Naive thymus-derived CD4-positive, alpha-beta T cell (primary cell): ENCODE measurements at regions of chr17 and their contacts with region 1.

Region 1: DNA sequence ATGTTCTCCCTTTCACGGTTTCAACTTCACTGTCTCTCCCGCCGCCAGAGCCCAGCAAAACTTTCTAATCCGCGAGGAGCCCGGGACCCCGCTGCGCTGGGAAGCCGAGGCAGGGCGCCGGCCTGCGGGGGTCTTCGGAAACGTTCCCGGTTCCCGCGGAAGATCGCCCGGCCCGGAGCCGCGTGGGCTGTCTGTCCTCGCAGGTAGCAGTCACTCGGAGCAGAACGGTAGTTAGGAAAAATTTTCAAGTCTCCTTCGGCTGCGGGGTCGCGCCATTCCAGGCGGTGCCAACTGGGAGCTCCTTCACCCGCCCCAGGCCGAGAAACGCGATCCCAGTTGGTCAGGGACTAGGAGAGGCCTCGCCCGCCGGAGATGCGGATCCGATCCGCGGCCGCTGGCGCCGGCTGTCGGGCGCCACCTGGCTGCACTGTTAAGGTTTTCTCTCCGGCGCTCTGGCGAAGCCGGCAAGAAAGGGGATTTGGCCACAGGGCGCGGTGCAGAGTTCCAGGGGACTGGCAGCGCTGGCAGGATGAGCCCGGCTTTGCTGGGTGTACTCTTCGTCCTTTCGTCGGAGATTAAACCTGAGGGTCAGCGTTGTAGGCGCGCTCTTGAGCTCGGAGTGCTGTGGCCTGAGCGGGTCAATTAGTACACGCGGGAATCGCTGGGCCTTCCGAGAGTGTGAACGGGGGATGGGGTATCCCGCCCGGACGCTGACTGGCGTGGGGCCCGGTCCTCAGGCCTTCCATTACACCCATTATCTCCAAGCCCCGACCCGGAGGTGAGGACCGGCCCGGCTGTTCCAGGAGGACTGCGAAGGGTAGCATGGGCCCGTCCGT is 135.4 kb downstream of the KCNJ12 start:
- DNase-seq: peak; percentile 31 to 68 (median 52)
- ATAC-seq: peak; percentile 86
- H3K4me3 ChIP-seq: peak overlapping the region; percentile 62
- H3K4me3 Mint-ChIP-seq: peak overlapping the region; percentile 54 to 82 (median 72)
- H3K27ac ChIP-seq: no peak overlapping the region
- H3K27ac Mint-ChIP-seq: peak overlapping the region in 3 of 9 donors; percentile 1 to 52 (median 38)
- H3K4me1 ChIP-seq: peaks cover 6 to 9% of the 10 kb centered on the region in 2 donors
- H3K4me1 Mint-ChIP-seq: peaks cover 0 to 21% (median 6%) of the 10 kb centered on the region in 7 donors
- H3K27me3 ChIP-seq: peaks cover 4 to 6% of the 10 kb centered on the region in 2 donors
- H3K27me3 Mint-ChIP-seq: peaks cover 22 to 67% (median 32%) of the 10 kb centered on the region in 5 donors

Region 2: GRCh38 chr17:19992803-19993713 is 1518.5 kb before region 1 on chr17:
- CTCF ChIA-PET with region 1: no interaction called
- POLR2A ChIA-PET with region 1: no interaction called
- intact Hi-C with region 1: loop called in 1 of 2 experiments (anchors 5 kb)
- DNase-seq: peak; percentile 52 to 79 (median 74)
- ATAC-seq: peak; percentile 100
- H3K4me3 ChIP-seq: no peak overlapping the region
- H3K4me3 Mint-ChIP-seq: peak overlapping the region in 7 of 10 donors; percentile 23 to 62 (median 56)
- H3K27ac ChIP-seq: no peak overlapping the region
- H3K27ac Mint-ChIP-seq: peak overlapping the region in 2 of 9 donors; percentile 14 to 36
- H3K4me1 ChIP-seq: no peaks in the 10 kb centered on the region
- H3K4me1 Mint-ChIP-seq: peaks cover 0 to 11% (median 9%) of the 10 kb centered on the region in 7 donors
- H3K27me3 ChIP-seq: no peaks in the 10 kb centered on the region
- H3K27me3 Mint-ChIP-seq: peaks cover 0 to 22% (median 15%) of the 10 kb centered on the region in 5 donors

Region 3: DNA sequence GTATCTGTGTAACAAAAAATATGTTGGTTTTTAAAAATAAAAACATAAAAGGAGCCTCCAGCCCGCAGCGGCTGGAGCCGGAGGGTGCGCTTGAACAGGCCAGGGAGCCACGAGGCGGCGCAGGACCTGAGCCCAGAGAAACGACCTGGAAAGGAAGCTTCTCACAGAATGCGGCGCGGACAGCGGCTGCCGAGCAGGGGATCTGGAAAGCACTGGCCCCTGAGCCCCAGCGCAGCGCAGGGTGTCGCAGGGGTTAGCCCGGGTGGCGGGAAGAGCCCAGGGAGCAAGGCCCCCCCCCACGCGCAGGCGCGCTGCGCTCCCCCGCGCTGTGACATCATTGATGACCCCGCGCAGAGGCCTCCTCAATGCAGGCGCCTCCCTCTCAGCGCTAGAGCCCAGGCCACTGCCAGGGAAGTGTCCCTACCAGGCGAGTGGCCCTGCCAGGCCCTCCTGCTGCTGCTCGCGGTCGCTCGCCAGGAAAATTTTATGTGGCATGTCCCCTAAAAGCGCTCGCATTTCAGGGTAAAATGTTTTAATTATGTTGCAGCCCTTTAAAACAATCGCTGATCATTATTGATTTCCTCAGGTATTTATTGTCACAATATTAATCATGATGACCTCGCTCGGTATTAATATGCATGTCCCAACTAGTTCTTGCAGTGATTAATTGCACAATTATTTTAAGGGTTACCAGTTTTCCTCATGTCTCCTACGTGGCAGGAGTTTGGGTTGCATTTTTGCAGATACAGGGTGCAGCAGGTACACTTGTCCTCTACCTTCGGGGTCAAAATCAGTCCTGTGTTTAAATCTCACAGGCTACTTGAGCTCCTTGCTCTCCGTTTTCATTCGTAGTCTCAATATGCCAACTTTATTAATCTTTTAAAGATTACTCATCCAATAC is 603.0 kb before region 1 on chr17:
- CTCF ChIA-PET with region 1: no interaction called
- POLR2A ChIA-PET with region 1: no interaction called
- intact Hi-C with region 1: loop called in 1 of 2 experiments (anchors 10 kb)
- DNase-seq: peak; percentile 65 to 80 (median 77)
- ATAC-seq: peak; percentile 98
- H3K4me3 ChIP-seq: peak overlapping the region; percentile 50
- H3K4me3 Mint-ChIP-seq: peak overlapping the region; percentile 68 to 87 (median 82)
- H3K27ac ChIP-seq: peak overlapping the region; percentile 63
- H3K27ac Mint-ChIP-seq: peak overlapping the region in 8 of 9 donors; percentile 66 to 81 (median 74)
- H3K4me1 ChIP-seq: peaks cover 2 to 7% of the 10 kb centered on the region in 2 donors
- H3K4me1 Mint-ChIP-seq: peaks cover 0 to 16% (median 11%) of the 10 kb centered on the region in 7 donors
- H3K27me3 ChIP-seq: no peaks in the 10 kb centered on the region
- H3K27me3 Mint-ChIP-seq: peaks cover under 1 to 25% (median 10%) of the 10 kb centered on the region in 5 donors

Region 4: DNA sequence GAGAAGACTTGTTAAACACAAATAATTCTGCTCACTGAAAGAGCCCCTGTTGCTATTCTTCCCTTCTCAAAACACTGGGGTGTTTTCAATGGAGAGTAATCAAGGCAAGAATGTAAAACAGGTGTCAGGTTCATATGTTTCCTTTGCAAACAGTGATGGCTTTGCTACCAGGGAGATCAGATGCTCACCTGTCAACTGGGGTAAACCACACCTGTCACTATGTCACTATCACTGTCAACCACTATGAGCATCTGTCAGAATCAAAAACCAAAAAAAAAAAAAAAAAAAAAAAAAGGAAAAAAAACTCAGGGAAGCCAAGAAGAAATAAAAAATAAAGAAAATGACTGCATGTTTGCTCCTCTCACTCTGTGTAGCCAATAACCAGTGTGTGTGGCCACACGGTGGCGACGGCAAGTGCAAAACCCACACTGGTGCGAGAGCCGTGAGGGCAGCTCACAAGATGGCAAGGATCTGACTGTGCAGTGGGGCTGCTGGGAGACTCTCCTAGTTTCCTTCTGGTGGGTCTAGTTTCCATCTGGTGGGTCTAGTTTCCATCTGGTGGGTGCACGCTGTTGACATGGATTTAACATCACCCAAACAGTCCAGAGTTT is 491.5 kb before region 1 on chr17:
- CTCF ChIA-PET with region 1: interaction called, 4 read pairs
- POLR2A ChIA-PET with region 1: no interaction called
- intact Hi-C with region 1: loop called in 1 of 2 experiments (anchors 5 kb)
- DNase-seq: peak in 4 of 9 donors; percentile 24 to 41 (median 30)
- ATAC-seq: peak; percentile 78
- H3K4me3 ChIP-seq: no peak overlapping the region
- H3K4me3 Mint-ChIP-seq: peak overlapping the region in 2 of 10 donors; percentile 32 to 45
- H3K27ac ChIP-seq: no peak overlapping the region
- H3K27ac Mint-ChIP-seq: peak overlapping the region in 5 of 9 donors; percentile 34 to 58 (median 52)
- H3K4me1 ChIP-seq: peaks cover 0 to 9% of the 10 kb centered on the region in 2 donors
- H3K4me1 Mint-ChIP-seq: peaks cover 21 to 56% (median 48%) of the 10 kb centered on the region in 7 donors
- H3K27me3 ChIP-seq: no peaks in the 10 kb centered on the region
- H3K27me3 Mint-ChIP-seq: no peaks in the 10 kb centered on the region

Region 5: GRCh38 chr17:21202512-21202911 is 309.1 kb before region 1 on chr17:
- CTCF ChIA-PET with region 1: no interaction called
- POLR2A ChIA-PET with region 1: no interaction called
- intact Hi-C with region 1: no loop called
- DNase-seq: no peak
- ATAC-seq: no peak
- H3K4me3 ChIP-seq: no peak overlapping the region
- H3K4me3 Mint-ChIP-seq: no peak overlapping the region
- H3K27ac ChIP-seq: no peak overlapping the region
- H3K27ac Mint-ChIP-seq: peak overlapping the region in 2 of 9 donors; percentile 20 to 36
- H3K4me1 ChIP-seq: no peaks in the 10 kb centered on the region
- H3K4me1 Mint-ChIP-seq: peaks cover 11 to 70% (median 38%) of the 10 kb centered on the region in 7 donors
- H3K27me3 ChIP-seq: no peaks in the 10 kb centered on the region
- H3K27me3 Mint-ChIP-seq: no peaks in the 10 kb centered on the region

Region 6: GRCh38 chr17:21214015-21214776 is 297.4 kb before region 1 on chr17 and contains the start of gene TMEM11:
- CTCF ChIA-PET with region 1: no interaction called
- POLR2A ChIA-PET with region 1: no interaction called
- intact Hi-C with region 1: loop called in 1 of 2 experiments (anchors 2 kb)
- DNase-seq: peak; percentile 91 to 97 (median 95)
- ATAC-seq: peak; percentile 96
- H3K4me3 ChIP-seq: peak within 1 kb of the TSS; percentile 93
- H3K4me3 Mint-ChIP-seq: peak within 1 kb of the TSS; percentile 90 to 97 (median 92)
- H3K27ac ChIP-seq: peak within 1 kb of the TSS; percentile 97
- H3K27ac Mint-ChIP-seq: peak within 1 kb of the TSS; percentile 84 to 96 (median 92)
- H3K4me1 ChIP-seq: peaks cover 25 to 32% of the 10 kb centered on the region in 2 donors
- H3K4me1 Mint-ChIP-seq: peaks cover 43 to 74% (median 53%) of the 10 kb centered on the region in 7 donors
- H3K27me3 ChIP-seq: no peaks in the 10 kb centered on the region
- H3K27me3 Mint-ChIP-seq: no peaks in the 10 kb centered on the region
- total RNA-seq, gene TMEM11: 11.7 to 22.9 (median 19.3) TPM

Region 7: DNA sequence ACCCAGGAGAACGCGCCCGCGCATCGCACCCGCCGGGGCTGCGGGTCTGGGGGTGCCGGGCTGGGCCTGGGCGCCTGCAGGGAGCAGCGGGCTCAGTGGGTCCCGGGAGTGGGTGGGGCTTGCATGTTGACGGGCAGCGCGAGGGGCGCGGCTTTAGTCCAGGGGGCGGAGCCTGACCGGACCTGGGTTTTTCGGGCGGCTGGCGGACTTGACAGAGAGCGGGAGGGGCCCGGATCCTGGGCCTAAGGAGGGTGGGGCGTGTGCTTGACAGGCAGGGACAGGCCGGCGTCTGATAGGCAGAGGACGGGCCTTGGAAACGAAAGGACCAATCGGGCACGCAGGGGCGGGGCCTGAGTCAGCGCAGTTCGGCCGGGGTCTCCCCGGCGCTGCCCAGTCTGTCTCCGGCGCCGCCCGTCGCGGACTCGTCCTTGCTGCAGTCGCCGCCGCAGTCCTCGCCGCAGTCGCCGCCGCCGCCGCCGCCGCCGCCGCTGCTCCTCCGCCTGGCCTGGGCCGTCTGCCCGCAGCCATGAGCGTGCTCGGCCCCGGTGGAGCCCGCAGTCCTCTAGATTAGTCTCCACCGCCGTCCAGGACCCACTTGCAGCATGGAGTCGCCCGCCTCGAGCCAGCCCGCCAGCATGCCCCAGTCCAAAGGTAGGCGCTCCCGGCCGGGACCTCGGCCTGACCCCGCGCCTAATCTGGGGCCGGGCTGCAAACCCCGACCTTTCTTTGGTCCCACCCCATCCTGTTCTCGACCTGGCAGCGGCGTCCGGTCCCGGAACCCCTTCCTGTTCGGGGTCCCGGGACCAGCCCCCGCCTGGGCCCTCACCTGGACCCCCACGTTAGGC is 227.0 kb before region 1 on chr17 and contains the start of gene MAP2K3:
- CTCF ChIA-PET with region 1: interaction called, 34 read pairs
- POLR2A ChIA-PET with region 1: no interaction called
- intact Hi-C with region 1: loop called (anchors 1 kb)
- DNase-seq: peak; percentile 79 to 98 (median 84)
- ATAC-seq: peak; percentile 78
- H3K4me3 ChIP-seq: peak within 1 kb of the TSS; percentile 90
- H3K4me3 Mint-ChIP-seq: peak within 1 kb of the TSS; percentile 88 to 99 (median 96)
- H3K27ac ChIP-seq: peak within 1 kb of the TSS; percentile 78
- H3K27ac Mint-ChIP-seq: peak within 1 kb of the TSS; percentile 88 to 97 (median 96)
- H3K4me1 ChIP-seq: peaks cover 39 to 40% of the 10 kb centered on the region in 2 donors
- H3K4me1 Mint-ChIP-seq: peaks cover 32 to 57% (median 52%) of the 10 kb centered on the region in 7 donors
- H3K27me3 ChIP-seq: no peaks in the 10 kb centered on the region
- H3K27me3 Mint-ChIP-seq: no peaks in the 10 kb centered on the region
- total RNA-seq, gene MAP2K3: 37.5 to 127 (median 39.2) TPM

Region 8: DNA sequence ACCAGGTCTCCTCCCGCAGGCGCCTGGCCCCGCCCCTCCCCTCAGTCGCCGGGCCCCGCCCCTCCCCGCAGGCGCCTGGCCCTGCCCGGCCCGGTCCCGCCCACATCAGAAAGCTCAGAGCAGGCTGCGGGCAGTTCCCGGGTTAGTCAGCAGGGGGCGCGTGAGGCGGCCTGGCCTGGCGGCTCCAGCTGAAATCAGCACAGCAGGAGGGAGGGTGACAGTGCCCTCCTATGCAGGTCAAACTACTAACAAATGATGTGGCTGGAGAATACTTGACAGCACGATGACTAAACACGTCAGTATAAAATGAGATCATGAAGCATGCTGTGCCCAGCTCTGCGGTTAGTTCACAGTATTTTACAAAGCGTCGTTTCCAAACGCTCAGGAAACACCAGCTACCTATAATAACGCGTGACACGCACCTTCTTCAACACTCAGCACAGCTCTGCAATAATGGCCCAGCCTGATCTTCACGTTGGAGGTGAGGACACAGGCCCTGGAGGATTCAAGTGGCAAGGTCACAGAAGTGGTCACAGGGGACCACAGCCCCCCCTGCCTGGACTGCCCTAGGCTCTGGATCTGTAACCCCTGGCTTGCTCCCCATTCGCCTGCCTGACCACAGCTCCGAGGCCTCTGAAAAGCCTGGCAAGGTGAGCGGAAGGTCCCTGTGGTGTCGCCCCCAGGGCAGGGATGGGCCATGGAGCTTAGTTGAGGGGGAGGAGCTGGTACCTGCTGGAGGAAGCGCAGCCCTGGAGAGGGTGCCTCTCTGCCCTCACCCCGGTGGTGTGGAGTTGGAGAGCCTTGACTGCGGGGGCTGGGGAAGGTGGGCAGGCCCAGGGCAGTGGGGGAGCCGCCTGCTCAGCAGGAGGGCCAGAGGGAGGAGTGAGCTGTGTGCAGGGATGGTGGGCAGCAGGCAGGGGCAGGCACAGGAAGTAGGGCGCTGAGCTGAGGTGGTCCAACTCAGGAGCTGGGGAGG is 54.2 kb before region 1 on chr17:
- CTCF ChIA-PET with region 1: interaction called, 33 read pairs
- POLR2A ChIA-PET with region 1: no interaction called
- intact Hi-C with region 1: loop called (anchors 1 kb)
- DNase-seq: peak; percentile 85 to 97 (median 90)
- ATAC-seq: peak; percentile 97
- H3K4me3 ChIP-seq: no peak overlapping the region
- H3K4me3 Mint-ChIP-seq: peak overlapping the region in 7 of 10 donors; percentile 27 to 71 (median 43)
- H3K27ac ChIP-seq: peak overlapping the region; percentile 19
- H3K27ac Mint-ChIP-seq: peak overlapping the region in 7 of 9 donors; percentile 36 to 82 (median 73)
- H3K4me1 ChIP-seq: peaks cover 0 to 6% of the 10 kb centered on the region in 2 donors
- H3K4me1 Mint-ChIP-seq: peaks cover 10 to 25% (median 18%) of the 10 kb centered on the region in 7 donors
- H3K27me3 ChIP-seq: no peaks in the 10 kb centered on the region
- H3K27me3 Mint-ChIP-seq: peaks cover 0 to 37% (median 0%) of the 10 kb centered on the region in 5 donors